OCI-LY7 (cell line): ENCODE measurements at regions of chr6 and their contacts with region 1.

Region 1: GRCh38 chr6:107114213-107114905 is 956 bp downstream of the BEND3 start:
- DNase-seq: peak; percentile 91
- H3K4me3 ChIP-seq: peak overlapping the region; percentile 71
- H3K27ac ChIP-seq: peak overlapping the region; percentile 99
- H3K4me1 ChIP-seq: peaks cover 53% of the 10 kb centered on the region
- CTCF ChIP-seq: peak; percentile 83

Region 2: DNA sequence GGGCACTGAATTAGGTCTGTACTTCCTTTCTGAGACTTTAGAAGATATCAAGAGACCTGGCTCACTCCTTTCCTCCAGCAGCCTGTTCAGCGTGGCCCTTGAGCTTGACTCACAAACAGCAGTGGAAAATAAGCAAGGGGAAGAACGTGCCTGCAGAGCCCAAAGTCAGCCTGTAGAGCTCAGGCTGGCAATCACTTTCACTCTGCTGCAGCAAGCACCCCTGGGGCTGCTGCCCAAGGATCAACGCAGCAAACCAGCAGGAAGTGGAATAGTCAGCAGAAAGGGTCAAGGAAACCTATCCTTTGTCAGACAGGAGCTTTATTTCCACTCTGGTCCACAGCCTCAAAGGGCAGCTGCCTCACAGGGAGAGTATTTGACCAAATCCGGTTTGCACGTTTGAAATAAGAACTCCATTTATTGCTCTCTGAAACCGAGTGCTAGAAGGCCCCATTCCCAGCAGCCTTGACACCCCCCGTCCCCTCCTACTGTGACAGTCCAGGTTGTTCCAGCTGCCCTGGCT is 950.9 kb before region 1 on chr6:
- CTCF ChIA-PET with region 1: no interaction called
- POLR2A ChIA-PET with region 1: no interaction called
- intact Hi-C with region 1: loop called (anchors 10 kb)
- DNase-seq: peak; percentile 74
- H3K4me3 ChIP-seq: peak overlapping the region; percentile 34
- H3K27ac ChIP-seq: peak overlapping the region; percentile 73
- H3K4me1 ChIP-seq: peaks cover 58% of the 10 kb centered on the region
- CTCF ChIP-seq: no peak

Region 3: DNA sequence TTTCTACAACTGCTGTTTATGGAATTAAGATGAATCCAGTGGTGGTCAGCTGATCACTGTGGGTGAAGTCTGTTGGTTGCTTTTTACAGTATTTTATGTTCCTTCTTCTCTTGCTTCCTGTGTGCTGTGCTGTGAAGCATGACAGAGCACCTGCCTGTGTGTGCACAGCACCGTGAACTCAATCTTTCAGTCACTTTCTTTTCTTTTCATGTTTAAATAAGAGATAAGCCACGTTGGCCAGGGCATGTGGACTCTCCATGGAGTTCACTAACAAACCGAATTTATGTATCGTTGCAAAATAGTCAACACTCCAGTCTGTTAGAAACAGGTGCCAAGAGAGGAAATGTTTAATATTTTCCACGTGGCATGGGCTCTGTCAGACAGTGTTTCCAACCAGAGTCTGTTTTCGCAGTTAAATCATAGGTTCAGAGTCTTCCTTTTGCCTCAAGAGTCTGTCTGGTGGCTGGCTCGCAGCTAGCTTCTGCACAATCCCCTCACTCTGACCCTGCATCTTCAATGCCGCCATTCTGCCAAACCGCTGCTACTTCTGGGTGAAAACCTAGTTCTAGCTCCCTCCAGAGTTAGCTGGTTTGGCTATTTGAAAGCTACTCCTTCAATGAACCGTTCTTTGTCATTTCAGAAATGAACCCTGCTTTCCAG is 411.8 kb before region 1 on chr6:
- CTCF ChIA-PET with region 1: no interaction called
- POLR2A ChIA-PET with region 1: interaction called, 4 read pairs
- intact Hi-C with region 1: loop called (anchors 5 kb)
- DNase-seq: peak; percentile 99
- H3K4me3 ChIP-seq: peak overlapping the region; percentile 61
- H3K27ac ChIP-seq: peak overlapping the region; percentile 99
- H3K4me1 ChIP-seq: peaks cover 65% of the 10 kb centered on the region
- CTCF ChIP-seq: no peak

Region 4: GRCh38 chr6:107075951-107076381 is 38.4 kb before region 1 on chr6:
- CTCF ChIA-PET with region 1: interaction called, 5 read pairs
- POLR2A ChIA-PET with region 1: interaction called, 3 read pairs
- intact Hi-C with region 1: loop called (anchors 1 kb)
- DNase-seq: peak; percentile 46
- H3K4me3 ChIP-seq: no peak overlapping the region
- H3K27ac ChIP-seq: no peak overlapping the region
- H3K4me1 ChIP-seq: no peaks in the 10 kb centered on the region
- CTCF ChIP-seq: peak; percentile 74

Region 5: DNA sequence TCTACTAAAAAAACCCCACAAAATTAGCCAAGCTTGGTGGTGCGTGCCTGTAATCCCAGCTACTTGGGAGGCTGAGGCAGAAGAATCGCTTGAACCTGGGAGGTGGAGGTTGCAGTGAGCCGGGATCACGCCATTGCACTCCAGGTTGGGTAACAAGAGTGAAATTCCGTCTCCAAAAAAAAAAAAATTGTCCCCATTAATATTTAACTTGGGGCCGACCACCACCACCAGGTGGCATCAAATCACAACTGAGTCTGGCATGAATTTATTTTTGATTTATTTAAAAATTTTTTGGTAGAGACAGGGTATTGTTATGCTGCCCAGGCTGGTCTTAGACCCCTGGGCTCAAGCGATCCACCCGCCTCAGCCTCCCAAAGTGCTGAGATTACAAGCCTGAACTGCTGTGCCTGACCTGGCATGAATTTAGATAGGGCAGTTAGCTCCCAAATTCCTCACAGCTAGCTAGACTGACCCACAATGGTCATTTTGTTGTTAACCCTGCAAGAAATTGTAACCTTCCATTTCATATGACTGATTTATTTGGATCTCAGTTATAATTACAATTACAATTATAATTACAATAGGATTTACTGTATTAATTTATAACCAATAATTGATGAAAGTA is 18.1 kb after region 1 on chr6:
- CTCF ChIA-PET with region 1: no interaction called
- POLR2A ChIA-PET with region 1: interaction called, 16 read pairs
- intact Hi-C with region 1: no loop called
- DNase-seq: peak; percentile 71
- H3K4me3 ChIP-seq: no peak overlapping the region
- H3K27ac ChIP-seq: no peak overlapping the region
- H3K4me1 ChIP-seq: peaks cover 13% of the 10 kb centered on the region
- CTCF ChIP-seq: peak; percentile 86

Region 6: DNA sequence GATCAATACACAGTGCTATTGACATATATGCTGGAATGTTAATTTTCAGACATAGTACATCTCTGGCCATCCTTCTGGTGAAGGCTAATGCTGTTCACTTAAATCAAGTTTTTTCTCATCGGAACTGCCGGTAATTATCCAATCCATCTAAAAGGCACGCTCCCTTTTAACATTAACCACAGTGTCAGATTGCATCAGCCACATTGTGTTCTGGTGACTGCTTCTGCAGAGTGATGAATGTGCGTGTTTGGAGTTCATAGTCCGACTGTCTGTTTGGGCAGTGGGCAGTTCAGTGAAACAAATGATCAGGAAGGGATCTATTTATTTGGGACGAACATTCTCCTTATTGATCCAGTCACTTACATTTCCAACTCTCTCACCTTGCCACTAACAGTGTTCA is 425.1 kb after region 1 on chr6:
- CTCF ChIA-PET with region 1: no interaction called
- POLR2A ChIA-PET with region 1: no interaction called
- intact Hi-C with region 1: loop called (anchors 5 kb)
- DNase-seq: no peak
- H3K4me3 ChIP-seq: no peak overlapping the region
- H3K27ac ChIP-seq: peak overlapping the region; percentile 98
- H3K4me1 ChIP-seq: peaks cover 62% of the 10 kb centered on the region
- CTCF ChIP-seq: no peak